ENCODE measurements at regions of chr10 and their contacts with region 1.

Region 1: GRCh38 chr10:12644380-12645144 is 295.2 kb downstream of the CAMK1D start:
- DNase-seq: no peak
- H3K4me3 Mint-ChIP-seq: peak overlapping the region; percentile 27
- H3K27ac Mint-ChIP-seq: peak overlapping the region; percentile 83
- H3K4me1 Mint-ChIP-seq: peaks cover 25% of the 10 kb centered on the region
- H3K27me3 Mint-ChIP-seq: no peaks in the 10 kb centered on the region

Region 2: GRCh38 chr10:12264204-12264940 is 380.2 kb before region 1 on chr10:
- intact Hi-C with region 1: no loop called
- DNase-seq: peak; percentile 89
- H3K4me3 Mint-ChIP-seq: peak overlapping the region; percentile 69
- H3K27ac Mint-ChIP-seq: peak overlapping the region; percentile 77
- H3K4me1 Mint-ChIP-seq: peaks cover 19% of the 10 kb centered on the region
- H3K27me3 Mint-ChIP-seq: no peaks in the 10 kb centered on the region

Region 3: DNA sequence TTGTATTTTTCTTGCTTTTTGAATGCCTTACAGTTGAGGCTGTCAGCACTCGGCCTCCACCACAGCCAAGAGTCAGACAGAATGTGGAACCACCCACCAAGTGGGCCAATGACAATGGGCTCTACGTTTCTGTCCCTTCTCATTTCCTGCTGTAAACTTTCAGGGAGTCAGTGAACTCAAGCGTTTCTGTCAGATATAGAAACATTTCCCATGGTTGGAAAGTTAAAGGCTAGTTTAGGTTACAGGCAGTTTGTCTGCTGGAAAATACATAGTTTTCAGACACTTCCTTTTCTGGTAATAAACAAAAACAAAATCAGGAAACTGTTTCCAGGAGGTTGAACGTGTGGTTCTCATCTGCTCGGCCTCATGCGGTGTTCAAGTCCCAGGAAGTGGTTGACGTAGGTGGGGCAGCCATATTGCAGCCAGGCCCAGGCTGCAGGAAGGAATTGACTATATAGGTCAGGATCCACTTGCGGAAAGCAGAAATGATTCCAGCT is 50.1 kb before region 1 on chr10:
- intact Hi-C with region 1: loop called (anchors 2 kb)
- DNase-seq: peak; percentile 87
- H3K4me3 Mint-ChIP-seq: peak overlapping the region; percentile 61
- H3K27ac Mint-ChIP-seq: peak overlapping the region; percentile 88
- H3K4me1 Mint-ChIP-seq: peaks cover 80% of the 10 kb centered on the region
- H3K27me3 Mint-ChIP-seq: no peaks in the 10 kb centered on the region

Region 4: DNA sequence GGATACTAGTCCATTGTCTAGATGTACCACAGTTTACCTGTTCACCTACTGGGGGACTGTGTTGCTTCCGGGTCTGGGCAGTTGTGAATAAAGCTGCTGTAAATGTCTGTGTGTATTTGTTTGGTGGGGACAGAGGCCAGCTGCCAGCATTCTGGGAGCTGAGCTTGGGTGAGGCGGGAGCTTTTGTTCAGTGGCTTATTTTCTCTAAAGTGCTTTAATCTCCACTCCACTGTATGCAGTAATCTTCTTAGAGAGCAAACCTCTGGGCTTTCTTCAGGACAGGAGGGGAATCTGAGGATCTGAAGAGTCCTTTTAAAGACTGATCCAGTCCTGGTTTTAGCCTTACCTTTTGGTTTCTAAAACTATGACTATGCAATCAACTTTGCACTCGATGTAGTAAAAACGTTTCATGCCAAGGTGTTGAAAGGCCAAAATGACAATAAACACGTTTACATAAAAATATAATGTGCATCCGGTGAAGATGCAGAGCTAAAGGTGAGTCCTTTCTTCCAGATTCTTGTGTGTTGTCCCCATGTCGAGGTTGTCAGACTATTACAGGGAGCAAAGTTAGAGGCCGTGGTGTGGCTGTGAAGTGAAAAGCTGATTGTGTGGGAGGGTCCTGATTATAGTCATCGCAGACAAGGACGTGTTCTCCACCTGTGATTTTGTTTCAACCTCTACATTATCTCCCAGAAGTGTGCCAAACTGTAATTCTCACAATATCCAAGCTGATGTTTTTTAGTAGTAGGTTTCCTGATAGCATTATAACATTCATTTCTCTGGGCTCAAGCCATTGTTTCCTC is 15.4 kb before region 1 on chr10:
- intact Hi-C with region 1: loop called (anchors 2 kb)
- DNase-seq: no peak
- H3K4me3 Mint-ChIP-seq: peak overlapping the region; percentile 4
- H3K27ac Mint-ChIP-seq: peak overlapping the region; percentile 49
- H3K4me1 Mint-ChIP-seq: peaks cover 20% of the 10 kb centered on the region
- H3K27me3 Mint-ChIP-seq: no peaks in the 10 kb centered on the region